HEK293 (cell line): ENCODE measurements at regions of chr1 and their contacts with region 1.

Region 1: GRCh38 chr1:19715334-19716203 is 50.9 kb downstream of the HTR6 start:
- H3K4me3 ChIP-seq: no peak overlapping the region
- H3K27ac ChIP-seq: no peak overlapping the region
- H3K4me1 ChIP-seq: no peaks in the 10 kb centered on the region
- CTCF ChIP-seq: peak; percentile 89

Region 2: DNA sequence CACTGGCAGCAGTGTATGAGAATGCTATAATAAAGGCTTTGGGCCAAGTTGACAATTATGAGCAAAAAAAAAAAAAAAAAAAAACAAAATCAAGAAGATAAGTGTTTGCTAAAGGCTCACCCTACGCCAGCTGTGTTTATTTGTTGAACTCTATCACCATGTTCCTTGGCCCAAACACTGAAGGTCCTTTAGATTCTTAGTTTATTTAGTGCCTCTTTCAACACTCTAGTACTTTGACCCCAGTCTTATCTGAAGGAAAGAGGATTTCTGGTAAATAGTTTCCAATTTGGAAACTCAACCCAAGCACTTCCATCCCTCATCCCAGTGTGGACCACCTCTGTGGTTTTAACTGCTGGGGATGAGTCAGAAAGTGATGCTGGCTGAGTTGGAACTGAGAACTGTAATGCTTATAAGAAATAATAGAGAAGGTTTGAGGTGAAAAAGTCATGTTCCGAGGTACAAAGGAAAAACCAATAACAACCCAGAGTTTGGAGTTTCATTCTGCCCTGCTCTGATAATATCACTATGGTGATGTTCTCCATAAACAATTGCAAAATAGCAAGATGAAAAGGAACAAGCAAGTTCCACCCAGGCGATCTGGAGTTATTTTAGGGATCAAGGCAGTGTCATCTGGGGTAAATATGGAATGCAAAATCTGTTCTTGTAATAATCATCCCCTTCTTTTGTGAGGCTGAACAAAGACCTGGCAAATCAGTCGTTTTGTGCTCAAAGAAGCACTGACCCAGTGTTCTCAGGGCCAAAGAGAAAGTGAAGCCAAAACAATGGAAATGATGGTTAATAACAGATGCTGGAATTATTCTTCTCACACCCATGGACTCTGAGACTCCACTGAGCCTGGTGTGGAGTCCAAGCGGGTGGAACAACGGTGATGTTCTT is 210.5 kb before region 1 on chr1:
- CTCF ChIA-PET with region 1: no interaction called
- POLR2A ChIA-PET with region 1: no interaction called
- H3K4me3 ChIP-seq: no peak overlapping the region
- H3K27ac ChIP-seq: peak overlapping the region; percentile 34; the same call in 1 of the 2 replicates
- H3K4me1 ChIP-seq: peaks cover 13% of the 10 kb centered on the region
- CTCF ChIP-seq: no peak

Region 3: GRCh38 chr1:19735440-19736127 is 20.0 kb after region 1 on chr1:
- CTCF ChIA-PET with region 1: interaction called, 10 read pairs
- POLR2A ChIA-PET with region 1: no interaction called
- H3K4me3 ChIP-seq: no peak overlapping the region
- H3K27ac ChIP-seq: no peak overlapping the region
- H3K4me1 ChIP-seq: no peaks in the 10 kb centered on the region
- CTCF ChIP-seq: no peak

Region 4: DNA sequence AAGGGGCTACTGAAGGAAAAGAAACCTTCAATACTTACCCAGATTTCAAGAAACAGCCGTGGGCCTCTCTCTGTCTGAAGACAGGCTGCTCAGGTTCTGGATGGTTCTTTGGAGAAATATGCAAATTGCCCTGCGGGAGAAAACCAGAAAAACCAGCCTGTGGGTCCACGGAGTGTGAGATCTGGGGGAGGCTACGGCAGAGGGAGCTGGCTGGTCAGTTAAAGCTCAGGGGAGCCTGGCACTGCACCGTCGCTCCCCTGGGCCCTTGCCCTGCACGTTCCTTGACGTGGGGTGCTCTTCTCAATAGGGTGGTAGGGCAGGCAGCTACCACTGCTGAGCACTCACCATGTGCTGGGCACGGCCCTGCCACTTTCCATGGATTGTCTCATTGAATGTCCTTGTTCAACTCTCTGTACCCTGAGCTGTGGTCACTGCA is 71.4 kb after region 1 on chr1:
- CTCF ChIA-PET with region 1: no interaction called
- POLR2A ChIA-PET with region 1: no interaction called
- H3K4me3 ChIP-seq: no peak overlapping the region
- H3K27ac ChIP-seq: no peak overlapping the region
- H3K4me1 ChIP-seq: no peaks in the 10 kb centered on the region
- CTCF ChIP-seq: no peak

Region 5: DNA sequence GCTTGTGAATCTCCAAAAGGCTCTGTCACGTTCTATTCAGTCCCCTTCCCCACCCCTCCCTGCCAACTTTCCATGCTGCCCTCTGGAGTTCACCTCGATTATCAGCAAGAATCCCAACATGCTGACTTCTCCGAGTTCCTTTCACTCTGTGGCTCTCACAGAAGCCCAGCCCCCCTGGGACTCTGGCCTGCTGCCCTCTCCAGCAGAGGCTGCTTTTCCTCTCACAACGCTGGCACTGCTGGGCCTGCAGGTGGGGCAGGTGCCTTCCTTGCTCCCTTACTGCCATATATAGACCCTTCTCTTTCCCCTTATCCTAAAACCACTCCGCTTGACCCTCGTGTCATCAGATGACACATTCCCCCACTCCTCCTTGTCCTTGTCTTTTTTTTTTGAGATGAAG is 109.7 kb after region 1 on chr1:
- CTCF ChIA-PET with region 1: no interaction called
- POLR2A ChIA-PET with region 1: no interaction called
- H3K4me3 ChIP-seq: no peak overlapping the region
- H3K27ac ChIP-seq: no peak overlapping the region
- H3K4me1 ChIP-seq: no peaks in the 10 kb centered on the region
- CTCF ChIP-seq: no peak